Posterior cingulate gyrus (tissue), 11 donors: ENCODE measurements at regions of chr7 and their contacts with region 1.

Region 1: GRCh38 chr7:97145068-97145467 is 27.6 kb downstream of the SDHAF3 start:
- DNase-seq: no peak

Region 2: DNA sequence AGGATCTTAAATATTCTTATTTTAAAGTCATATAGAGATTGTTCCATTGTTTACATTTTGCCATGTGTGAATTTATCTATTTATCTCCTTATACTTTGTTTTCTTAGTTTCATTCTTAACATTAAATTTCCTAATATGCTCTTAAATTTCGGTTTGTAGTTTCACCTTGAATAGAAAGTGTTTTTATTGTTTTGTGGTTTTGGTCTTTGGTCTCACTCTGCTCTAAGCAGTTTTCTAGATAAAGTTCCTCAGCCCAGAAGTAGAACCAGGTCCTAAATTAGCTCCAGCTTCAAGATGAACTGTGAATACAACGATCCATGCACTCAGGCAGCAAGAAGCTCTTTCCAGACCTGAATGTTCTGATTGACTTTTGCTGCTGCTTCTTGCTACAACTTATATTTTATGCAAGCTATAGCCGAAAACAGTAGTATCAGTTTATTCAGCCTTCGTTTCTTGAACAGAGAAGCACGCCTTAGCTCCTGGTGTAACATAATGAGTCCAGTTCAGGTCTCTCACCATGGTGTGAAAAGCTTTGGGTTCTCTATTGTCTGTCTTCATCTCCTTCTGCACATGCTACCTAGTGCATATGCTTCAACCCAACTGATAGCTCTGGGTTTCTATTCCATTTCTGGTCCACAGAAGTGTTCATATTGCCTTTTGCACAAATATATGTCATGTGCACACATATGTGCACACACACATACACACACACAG is 530.8 kb before region 1 on chr7:
- intact Hi-C with region 1: no loop called
- DNase-seq: no peak

Region 3: GRCh38 chr7:97179454-97180104 is 34.5 kb after region 1 on chr7:
- intact Hi-C with region 1: no loop called
- DNase-seq: peak in 4 of 10 donors; percentile 19 to 38 (median 26)

Region 4: DNA sequence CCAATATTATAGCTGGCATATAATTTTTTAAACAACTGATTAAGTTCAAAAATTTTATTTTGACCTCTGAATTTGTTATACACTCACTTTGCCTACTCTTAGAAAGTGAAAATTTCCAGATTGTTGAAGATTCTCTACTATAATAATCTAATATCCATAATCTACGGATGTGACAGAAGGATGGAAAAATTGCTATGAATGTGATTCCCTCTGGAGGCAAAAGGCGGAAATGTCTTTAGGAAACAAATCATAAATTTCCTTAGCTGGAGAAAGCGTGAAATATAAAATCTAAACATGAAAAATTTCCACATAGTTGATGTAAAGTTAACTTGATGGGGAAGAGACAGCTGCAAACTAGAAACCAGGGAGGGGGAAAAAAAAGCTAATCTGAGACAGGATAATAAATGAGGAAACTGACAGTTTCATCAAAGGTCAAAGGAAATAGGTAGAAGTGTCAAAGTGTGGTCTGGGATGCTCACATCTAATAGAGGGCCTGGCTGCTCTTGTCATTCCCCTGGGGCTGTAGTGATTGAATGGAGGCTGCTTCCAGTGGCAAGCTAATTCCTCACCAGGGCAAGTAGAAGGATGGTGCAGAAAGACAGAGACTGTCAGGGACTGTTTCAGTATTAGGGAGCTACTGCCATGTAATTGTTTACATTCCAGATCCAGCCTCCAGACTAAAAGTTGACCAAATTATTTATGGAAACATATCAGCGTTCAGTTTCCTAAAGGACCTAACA is 236.9 kb after region 1 on chr7:
- intact Hi-C with region 1: loop called (anchors 1 kb)
- DNase-seq: no peak

Region 5: DNA sequence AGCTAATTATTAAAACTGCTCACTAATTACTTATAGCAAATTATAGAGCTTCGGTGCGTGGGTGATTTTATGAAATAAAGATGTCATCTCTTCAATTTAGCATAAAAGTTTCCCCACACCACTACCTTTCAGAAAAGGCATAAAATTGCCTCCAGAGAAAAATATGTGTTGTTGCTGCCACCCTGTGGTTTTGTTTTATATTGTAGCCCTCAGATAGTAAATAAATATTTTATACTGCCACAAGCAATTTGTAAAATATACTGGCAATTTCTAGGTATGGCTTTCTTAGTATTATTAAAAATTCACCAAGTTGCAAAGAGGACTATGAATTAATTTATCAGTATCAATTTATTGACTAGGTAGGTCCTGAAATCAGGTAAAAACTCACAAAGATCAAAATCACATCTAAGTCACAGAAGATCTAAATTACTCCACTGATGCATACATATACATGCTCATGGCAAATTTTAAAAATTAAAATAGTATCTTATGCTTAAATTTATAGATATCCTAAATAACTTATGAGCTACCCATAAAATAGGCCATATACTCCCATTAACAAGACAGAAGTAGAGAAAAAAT is 700.6 kb after region 1 on chr7:
- intact Hi-C with region 1: loop called (anchors 2 kb)
- DNase-seq: no peak